HepG2 (cell line): ENCODE measurements at regions of chr11 and their contacts with region 1.

Region 1: DNA sequence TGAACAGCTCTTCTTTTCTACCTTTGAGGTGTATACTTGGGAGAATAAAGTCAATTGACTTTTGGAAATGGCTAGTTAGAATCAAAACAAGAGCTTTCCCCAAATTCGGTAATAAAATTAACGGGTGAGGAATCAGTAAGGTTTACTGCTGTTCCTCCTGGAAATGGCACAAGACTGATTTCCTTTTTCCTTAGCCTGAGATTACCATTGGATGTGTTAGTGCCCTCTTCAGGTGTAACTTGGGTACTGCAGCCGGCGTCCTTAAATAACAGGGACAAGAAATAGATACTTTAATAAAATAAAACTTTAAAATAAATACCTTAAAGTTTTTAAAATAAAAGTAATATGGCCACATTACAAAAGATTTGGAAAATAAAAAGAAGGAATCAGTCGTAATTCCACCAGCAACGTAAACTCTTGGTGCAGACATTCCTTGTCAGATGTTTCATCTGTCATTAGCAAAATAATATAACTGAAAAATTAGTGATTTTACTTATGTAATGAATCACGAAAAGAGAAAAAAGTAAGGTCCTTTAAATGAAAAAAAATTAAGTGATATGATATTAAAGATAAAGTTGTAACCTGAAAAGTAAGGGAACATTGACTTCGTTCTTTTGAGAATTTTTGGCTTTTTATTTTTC is 29.7 kb downstream of the ZFTA start:
- DNase-seq: peak; percentile 65
- ATAC-seq: no peak
- H3K4me3 ChIP-seq: no peak overlapping the region
- H3K27ac ChIP-seq: no peak overlapping the region
- H3K4me1 ChIP-seq: peaks cover 20% of the 10 kb centered on the region
- H3K27me3 ChIP-seq: no peaks in the 10 kb centered on the region
- CTCF ChIP-seq: peak; percentile 68
- EP300 ChIP-seq: no peak
- POLR2A ChIP-seq: no peak
- RAD21 ChIP-seq: no peak

Region 2: DNA sequence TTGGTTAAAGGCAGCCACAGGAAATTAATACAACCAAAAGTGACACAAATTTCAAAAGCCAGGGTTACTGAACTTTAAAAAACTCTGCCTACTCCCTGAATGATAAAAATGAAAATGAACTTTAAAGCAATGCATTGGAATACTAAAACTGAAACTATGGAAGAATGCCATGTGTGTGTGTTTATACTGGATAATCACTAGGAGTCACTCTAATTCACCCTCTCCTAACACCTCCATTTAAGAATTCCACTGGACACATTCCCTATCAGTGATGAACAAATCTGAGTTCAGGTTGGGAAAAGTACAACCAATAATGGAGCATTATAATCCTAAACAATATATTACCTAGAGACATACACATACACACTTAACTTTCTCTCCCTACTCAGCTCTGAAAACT is 97.1 kb before region 1 on chr11:
- CTCF ChIA-PET with region 1: interaction called, 3 read pairs
- POLR2A ChIA-PET with region 1: no interaction called
- in situ Hi-C with region 1: no loop called
- intact Hi-C with region 1: loop called (anchors 5 kb)
- DNase-seq: no peak
- ATAC-seq: no peak
- H3K4me3 ChIP-seq: peak overlapping the region in 1 of 3 experiments; percentile 14; a peak in 1 of 6 replicates
- H3K27ac ChIP-seq: no peak overlapping the region
- H3K4me1 ChIP-seq: no peaks in the 10 kb centered on the region
- H3K27me3 ChIP-seq: no peaks in the 10 kb centered on the region
- CTCF ChIP-seq: peak; percentile 20
- EP300 ChIP-seq: no peak
- POLR2A ChIP-seq: no peak
- RAD21 ChIP-seq: no peak

Region 3: GRCh38 chr11:63663809-63664208 is 75.0 kb before region 1 on chr11:
- CTCF ChIA-PET with region 1: no interaction called
- POLR2A ChIA-PET with region 1: no interaction called
- in situ Hi-C with region 1: no loop called
- intact Hi-C with region 1: no loop called
- DNase-seq: no peak
- ATAC-seq: no peak
- H3K4me3 ChIP-seq: no peak overlapping the region
- H3K27ac ChIP-seq: no peak overlapping the region
- H3K4me1 ChIP-seq: no peaks in the 10 kb centered on the region
- H3K27me3 ChIP-seq: no peaks in the 10 kb centered on the region; a peak in 1 of 5 replicates
- CTCF ChIP-seq: no peak
- EP300 ChIP-seq: no peak
- POLR2A ChIP-seq: no peak
- RAD21 ChIP-seq: no peak

Region 4: GRCh38 chr11:63681321-63682049 is 57.4 kb before region 1 on chr11 and contains the start of gene RTN3:
- CTCF ChIA-PET with region 1: no interaction called
- POLR2A ChIA-PET with region 1: no interaction called
- in situ Hi-C with region 1: no loop called
- intact Hi-C with region 1: loop called (anchors 5 kb)
- DNase-seq: peak; percentile 91
- ATAC-seq: peak; percentile 89
- H3K4me3 ChIP-seq: peak within 1 kb of the TSS; percentile 78 to 83 (median 79)
- H3K27ac ChIP-seq: peak within 1 kb of the TSS; percentile 86
- H3K4me1 ChIP-seq: peaks cover 28% of the 10 kb centered on the region
- H3K27me3 ChIP-seq: peaks cover 0 to 4% of the 10 kb centered on the region in 2 experiments; a peak in 2 of 5 replicates
- CTCF ChIP-seq: peak; percentile 35
- EP300 ChIP-seq: no peak
- POLR2A ChIP-seq: peak; percentile 87 to 94
- RAD21 ChIP-seq: no peak
- total RNA-seq, gene RTN3: 25.3 and 32.2 TPM in 2 replicates

Region 5: DNA sequence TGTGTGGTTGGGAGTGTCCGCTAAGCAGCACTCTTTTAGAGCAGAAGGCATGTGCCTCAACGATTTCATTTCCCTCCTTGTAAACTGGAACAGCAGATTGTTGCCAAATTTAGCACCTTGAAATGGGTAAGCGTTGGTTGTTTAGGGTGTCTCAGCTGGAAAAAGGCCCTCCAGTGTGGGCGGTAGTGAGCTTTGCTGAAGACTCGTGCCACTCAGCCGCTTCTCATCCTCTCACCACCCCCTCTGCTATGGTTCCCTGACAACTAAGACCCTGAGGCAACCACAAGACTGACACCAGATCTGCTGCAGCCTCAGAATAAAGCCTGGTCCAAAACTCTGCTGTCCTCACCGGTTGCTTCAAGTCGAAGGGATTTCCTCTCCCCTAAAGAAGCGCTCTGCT is 457.8 kb after region 1 on chr11:
- CTCF ChIA-PET with region 1: no interaction called
- POLR2A ChIA-PET with region 1: no interaction called
- in situ Hi-C with region 1: no loop called
- intact Hi-C with region 1: no loop called
- DNase-seq: no peak
- ATAC-seq: no peak
- H3K4me3 ChIP-seq: no peak overlapping the region
- H3K27ac ChIP-seq: no peak overlapping the region
- H3K4me1 ChIP-seq: no peaks in the 10 kb centered on the region
- H3K27me3 ChIP-seq: no peaks in the 10 kb centered on the region
- CTCF ChIP-seq: no peak
- EP300 ChIP-seq: no peak
- POLR2A ChIP-seq: no peak
- RAD21 ChIP-seq: no peak